PC-3 (cell line): ENCODE measurements at regions of chr5 and their contacts with region 1.

Region 1: GRCh38 chr5:160312134-160312959 is at the start of gene CCNJL:
- DNase-seq: peak; percentile 74
- ATAC-seq: peak; percentile 39
- H3K4me3 ChIP-seq: peak within 1 kb of the TSS; percentile 75
- H3K27ac ChIP-seq: peak within 1 kb of the TSS; percentile 25; the same call in 1 of the 2 replicates
- H3K4me1 ChIP-seq: peaks cover 36% of the 10 kb centered on the region
- H3K27me3 ChIP-seq: no peaks in the 10 kb centered on the region
- CTCF ChIP-seq: no peak
- total RNA-seq, gene CCNJL: 7.7 and 9.3 TPM in 2 replicates

Region 2: GRCh38 chr5:160008877-160009590 is 303.3 kb before region 1 on chr5 and contains the start of gene TTC1:
- CTCF ChIA-PET with region 1: no interaction called
- POLR2A ChIA-PET with region 1: interaction called, 24 read pairs
- intact Hi-C with region 1: no loop called
- DNase-seq: peak; percentile 99
- ATAC-seq: peak; percentile 94
- H3K4me3 ChIP-seq: peak within 1 kb of the TSS; percentile 86
- H3K27ac ChIP-seq: peak within 1 kb of the TSS; percentile 44
- H3K4me1 ChIP-seq: peaks cover 19% of the 10 kb centered on the region
- H3K27me3 ChIP-seq: no peaks in the 10 kb centered on the region
- CTCF ChIP-seq: no peak
- total RNA-seq, gene TTC1: 61.4 and 65.0 TPM in 2 replicates

Region 3: GRCh38 chr5:160520609-160521391 is 208.5 kb after region 1 on chr5:
- CTCF ChIA-PET with region 1: no interaction called
- POLR2A ChIA-PET with region 1: no interaction called
- intact Hi-C with region 1: no loop called
- DNase-seq: no peak
- ATAC-seq: no peak
- H3K4me3 ChIP-seq: no peak overlapping the region
- H3K27ac ChIP-seq: no peak overlapping the region
- H3K4me1 ChIP-seq: no peaks in the 10 kb centered on the region
- H3K27me3 ChIP-seq: no peaks in the 10 kb centered on the region
- CTCF ChIP-seq: no peak